ENCODE measurements at regions of chr19 and their contacts with region 1.

Region 1: DNA sequence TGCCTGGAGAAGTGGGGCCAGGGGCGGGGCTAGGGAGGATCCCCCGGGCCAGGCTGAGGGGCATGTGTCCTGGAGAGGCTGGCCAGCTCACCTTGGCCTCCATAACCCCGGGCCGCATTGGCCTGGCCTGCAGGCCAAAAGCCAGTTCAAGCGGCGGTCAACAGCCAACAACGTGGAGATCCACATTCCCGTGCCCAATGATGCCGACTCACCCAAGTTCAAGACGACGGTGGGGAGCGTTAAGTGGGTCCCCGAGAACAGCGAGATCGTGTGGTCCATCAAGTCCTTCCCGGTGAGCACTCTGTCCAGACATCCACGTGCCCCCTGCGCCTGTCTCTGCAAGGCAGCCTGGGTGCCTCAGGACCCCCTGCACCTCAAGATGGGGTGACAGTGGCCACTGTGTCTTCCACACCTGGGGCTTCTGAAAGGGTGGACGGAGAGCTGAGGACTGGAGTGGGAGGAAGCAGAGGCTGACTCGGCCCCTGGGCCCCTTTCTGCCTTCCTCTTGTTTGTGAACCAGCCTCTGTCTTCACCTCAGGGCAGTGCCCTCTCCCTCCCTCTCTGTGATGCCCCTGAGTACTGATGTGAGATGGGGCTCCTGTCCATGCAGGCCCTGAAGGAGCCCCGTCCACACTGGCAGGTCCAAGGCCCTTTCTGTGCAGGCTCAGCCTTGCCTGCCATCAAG is 31.1 kb downstream of the AP1M1 start:
- DNase-seq: no peak
- H3K4me3 ChIP-seq: no peak overlapping the region
- H3K27ac ChIP-seq: no peak overlapping the region
- H3K4me1 ChIP-seq: no peaks in the 10 kb centered on the region
- H3K27me3 ChIP-seq: no peaks in the 10 kb centered on the region
- CTCF ChIP-seq: no peak
- POLR2A ChIP-seq: no peak

Region 2: GRCh38 chr19:16216744-16217670 is 11.8 kb before region 1 on chr19:
- intact Hi-C with region 1: loop called (anchors 1 kb)
- DNase-seq: no peak
- H3K4me3 ChIP-seq: no peak overlapping the region
- H3K27ac ChIP-seq: no peak overlapping the region
- H3K4me1 ChIP-seq: no peaks in the 10 kb centered on the region
- H3K27me3 ChIP-seq: no peaks in the 10 kb centered on the region
- CTCF ChIP-seq: no peak
- POLR2A ChIP-seq: no peak

Measured in breast epithelium (tissue), 4 donors.